Calu3 (cell line): ENCODE measurements at regions of chrX and their contacts with region 1.

Region 1: GRCh38 chrX:51461053-51462044 is 35.0 kb downstream of the NUDT11 start:
- DNase-seq: peak; percentile 2
- H3K4me3 Mint-ChIP-seq: no peak overlapping the region
- H3K27ac Mint-ChIP-seq: no peak overlapping the region
- H3K4me1 Mint-ChIP-seq: no peaks in the 10 kb centered on the region
- H3K27me3 Mint-ChIP-seq: peaks cover 14% of the 10 kb centered on the region
- CTCF ChIP-seq: peak; percentile 14

Region 2: DNA sequence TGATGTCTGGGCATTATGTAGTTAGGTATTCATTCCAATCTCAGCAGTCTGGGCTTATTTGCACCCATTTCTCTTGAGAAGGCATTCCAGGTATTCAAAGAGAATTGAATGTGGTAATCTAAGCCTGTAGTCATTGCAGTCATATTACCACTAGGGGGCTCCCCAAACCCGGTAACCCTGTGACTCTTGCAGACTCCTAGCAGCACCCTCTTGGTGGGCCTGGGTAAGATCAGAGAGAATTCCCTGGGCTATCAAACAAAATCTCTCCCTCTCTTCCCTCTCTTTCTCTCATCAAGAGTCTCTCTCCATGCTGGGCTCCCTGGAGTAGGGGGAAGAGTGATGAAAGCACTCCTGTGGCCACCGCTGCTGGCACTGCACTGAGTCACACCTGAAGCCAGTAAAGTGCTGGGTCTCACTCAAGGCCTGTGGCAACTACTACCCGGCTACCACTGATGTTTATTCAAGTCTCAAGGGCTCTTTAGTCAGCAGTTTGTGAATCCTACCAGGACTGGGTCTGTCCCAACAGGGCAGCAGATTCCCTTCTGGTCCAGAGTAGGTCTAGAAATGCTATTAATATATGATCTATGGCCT is 316.4 kb before region 1 on chrX:
- CTCF ChIA-PET with region 1: no interaction called
- intact Hi-C with region 1: loop called (anchors 2 kb)
- DNase-seq: peak; percentile 44
- H3K4me3 Mint-ChIP-seq: no peak overlapping the region
- H3K27ac Mint-ChIP-seq: no peak overlapping the region
- H3K4me1 Mint-ChIP-seq: no peaks in the 10 kb centered on the region
- H3K27me3 Mint-ChIP-seq: peaks cover 32% of the 10 kb centered on the region
- CTCF ChIP-seq: peak; percentile 18

Region 3: GRCh38 chrX:51336584-51336983 is 124.8 kb before region 1 on chrX:
- CTCF ChIA-PET with region 1: interaction called, 3 read pairs
- intact Hi-C with region 1: loop called (anchors 2 kb)
- DNase-seq: peak; percentile 3
- H3K4me3 Mint-ChIP-seq: no peak overlapping the region
- H3K27ac Mint-ChIP-seq: no peak overlapping the region
- H3K4me1 Mint-ChIP-seq: no peaks in the 10 kb centered on the region
- H3K27me3 Mint-ChIP-seq: no peaks in the 10 kb centered on the region
- CTCF ChIP-seq: no peak

Region 4: GRCh38 chrX:51487960-51488267 is 26.6 kb after region 1 on chrX:
- CTCF ChIA-PET with region 1: interaction called, 10 read pairs
- intact Hi-C with region 1: no loop called
- DNase-seq: no peak
- H3K4me3 Mint-ChIP-seq: no peak overlapping the region
- H3K27ac Mint-ChIP-seq: no peak overlapping the region
- H3K4me1 Mint-ChIP-seq: no peaks in the 10 kb centered on the region
- H3K27me3 Mint-ChIP-seq: peaks cover 19% of the 10 kb centered on the region
- CTCF ChIP-seq: no peak

Region 5: GRCh38 chrX:51520393-51520792 is 59.0 kb after region 1 on chrX:
- CTCF ChIA-PET with region 1: no interaction called
- intact Hi-C with region 1: no loop called
- DNase-seq: no peak
- H3K4me3 Mint-ChIP-seq: no peak overlapping the region
- H3K27ac Mint-ChIP-seq: no peak overlapping the region
- H3K4me1 Mint-ChIP-seq: no peaks in the 10 kb centered on the region
- H3K27me3 Mint-ChIP-seq: peaks cover 5% of the 10 kb centered on the region
- CTCF ChIP-seq: no peak

Region 6: DNA sequence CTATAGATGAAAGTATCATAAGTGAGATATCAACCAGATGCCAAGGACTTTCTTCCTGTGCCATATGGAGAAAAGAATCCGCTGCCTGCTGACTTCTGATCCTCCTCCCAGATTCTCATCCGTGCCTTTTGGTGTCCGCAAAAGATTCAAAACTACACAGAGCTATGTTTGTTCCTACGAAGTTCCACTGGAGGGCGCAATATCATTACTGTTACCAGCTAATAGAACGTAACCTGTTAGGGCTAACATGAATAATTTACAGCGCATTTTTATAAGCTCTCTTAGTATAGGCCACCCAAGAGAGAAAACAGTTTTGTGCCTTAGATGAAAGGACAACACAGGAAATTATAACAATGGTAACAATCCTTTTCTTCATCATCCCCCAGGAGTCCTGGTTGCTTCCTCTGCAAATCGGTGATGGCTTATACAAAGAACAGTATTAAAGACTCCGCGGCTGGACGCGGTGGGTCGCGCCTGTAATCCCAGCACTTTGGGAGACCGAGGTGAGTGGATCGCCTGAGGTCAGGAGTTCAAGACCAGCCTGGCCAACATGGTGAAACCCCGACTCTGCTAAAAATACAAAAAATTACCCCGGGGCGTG is 180.2 kb after region 1 on chrX:
- CTCF ChIA-PET with region 1: no interaction called
- intact Hi-C with region 1: no loop called
- DNase-seq: peak; percentile 41
- H3K4me3 Mint-ChIP-seq: no peak overlapping the region
- H3K27ac Mint-ChIP-seq: no peak overlapping the region
- H3K4me1 Mint-ChIP-seq: no peaks in the 10 kb centered on the region
- H3K27me3 Mint-ChIP-seq: no peaks in the 10 kb centered on the region
- CTCF ChIP-seq: peak; percentile 53